Natural killer cell (primary cell): ENCODE measurements at regions of chr5 and their contacts with region 1.

Region 1: DNA sequence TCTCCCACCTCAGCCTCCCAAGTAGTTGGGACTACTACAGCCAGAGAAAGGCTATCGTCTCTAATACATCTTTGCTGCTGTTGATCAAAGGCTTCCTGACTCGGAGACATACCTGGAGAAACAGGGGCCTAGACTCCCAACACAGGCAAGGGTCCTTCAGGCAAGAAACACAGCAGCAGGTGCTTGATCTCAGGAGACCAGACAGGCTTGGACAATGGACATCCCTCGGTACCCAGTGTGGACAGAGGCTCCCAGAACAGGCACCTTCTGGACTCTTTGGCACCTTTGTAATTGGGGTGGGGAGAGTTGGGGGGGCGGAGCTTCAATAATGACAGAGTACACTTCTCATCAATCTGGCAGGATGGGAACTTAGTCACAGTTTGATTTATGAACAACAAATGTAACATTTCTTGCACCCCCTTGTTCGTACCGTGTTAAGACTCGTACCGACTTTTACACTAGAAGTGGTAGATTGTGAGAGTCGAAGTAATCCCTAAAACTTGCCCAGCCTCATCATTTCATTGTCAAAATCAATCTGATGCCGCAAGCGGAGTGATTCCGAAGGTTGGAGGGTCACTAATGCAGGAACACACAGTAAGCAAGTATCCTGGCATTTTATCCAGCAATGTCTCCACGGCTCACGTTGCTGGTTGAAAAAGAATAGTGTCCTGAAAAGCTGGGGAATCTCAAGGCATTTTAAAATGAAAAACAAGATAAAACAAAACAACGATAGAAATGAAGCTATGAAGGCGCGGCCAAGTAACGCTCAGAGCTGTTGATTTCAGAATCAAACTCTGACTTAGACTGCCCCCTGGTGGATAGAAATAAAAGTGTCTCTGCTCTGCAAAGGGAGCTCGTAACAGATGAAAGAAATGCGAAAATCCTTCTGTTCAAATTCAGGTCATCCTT is 46.4 kb upstream of the STK32A start:
- DNase-seq: peak in 1 of 2 donors; percentile 79
- ATAC-seq: peak; percentile 69 to 87 (median 80)
- H3K4me3 ChIP-seq: no peak overlapping the region
- H3K4me3 Mint-ChIP-seq: no peak overlapping the region
- H3K27ac ChIP-seq: no peak overlapping the region
- H3K27ac Mint-ChIP-seq: no peak overlapping the region
- H3K4me1 ChIP-seq: peaks cover 3% of the 10 kb centered on the region
- H3K4me1 Mint-ChIP-seq: peaks cover 6 to 8% of the 10 kb centered on the region in 2 donors
- H3K27me3 ChIP-seq: no peaks in the 10 kb centered on the region
- H3K27me3 Mint-ChIP-seq: peaks cover 6 to 33% of the 10 kb centered on the region in 2 donors
- CTCF ChIP-seq: peak; percentile 88

Region 2: GRCh38 chr5:146426853-146427618 is 761.4 kb before region 1 on chr5:
- intact Hi-C with region 1: loop called (anchors 5 kb)
- DNase-seq: peak in 1 of 2 donors; percentile 57
- ATAC-seq: peak; percentile 46 to 76 (median 61)
- H3K4me3 ChIP-seq: no peak overlapping the region
- H3K4me3 Mint-ChIP-seq: no peak overlapping the region
- H3K27ac ChIP-seq: no peak overlapping the region
- H3K27ac Mint-ChIP-seq: no peak overlapping the region
- H3K4me1 ChIP-seq: no peaks in the 10 kb centered on the region
- H3K4me1 Mint-ChIP-seq: peaks cover 5 to 7% of the 10 kb centered on the region in 2 donors
- H3K27me3 ChIP-seq: no peaks in the 10 kb centered on the region
- H3K27me3 Mint-ChIP-seq: peaks cover 10 to 14% of the 10 kb centered on the region in 2 donors
- CTCF ChIP-seq: peak; percentile 77

Region 3: GRCh38 chr5:146533260-146533857 is 655.1 kb before region 1 on chr5:
- intact Hi-C with region 1: loop called (anchors 1 kb)
- DNase-seq: peak; percentile 62 to 85
- ATAC-seq: peak; percentile 90 to 99 (median 98)
- H3K4me3 ChIP-seq: no peak overlapping the region
- H3K4me3 Mint-ChIP-seq: no peak overlapping the region
- H3K27ac ChIP-seq: no peak overlapping the region
- H3K27ac Mint-ChIP-seq: no peak overlapping the region
- H3K4me1 ChIP-seq: no peaks in the 10 kb centered on the region
- H3K4me1 Mint-ChIP-seq: peaks cover 6% of the 10 kb centered on the region in 2 donors
- H3K27me3 ChIP-seq: no peaks in the 10 kb centered on the region
- H3K27me3 Mint-ChIP-seq: peaks cover 0 to under 1% of the 10 kb centered on the region in 2 donors
- CTCF ChIP-seq: peak; percentile 78

Region 4: GRCh38 chr5:146541958-146542849 is 646.2 kb before region 1 on chr5:
- intact Hi-C with region 1: loop called (anchors 1 kb)
- DNase-seq: peak; percentile 64 to 78
- ATAC-seq: peak; percentile 80 to 99 (median 89)
- H3K4me3 ChIP-seq: no peak overlapping the region
- H3K4me3 Mint-ChIP-seq: no peak overlapping the region
- H3K27ac ChIP-seq: no peak overlapping the region
- H3K27ac Mint-ChIP-seq: no peak overlapping the region
- H3K4me1 ChIP-seq: no peaks in the 10 kb centered on the region
- H3K4me1 Mint-ChIP-seq: no peaks in the 10 kb centered on the region
- H3K27me3 ChIP-seq: peaks cover 4% of the 10 kb centered on the region
- H3K27me3 Mint-ChIP-seq: peaks cover 0 to 7% of the 10 kb centered on the region in 2 donors
- CTCF ChIP-seq: peak; percentile 92

Region 5: GRCh38 chr5:146965761-146966659 is 222.4 kb before region 1 on chr5:
- intact Hi-C with region 1: loop called (anchors 5 kb)
- DNase-seq: peak; percentile 38 to 83
- ATAC-seq: peak; percentile 90 to 99 (median 97)
- H3K4me3 ChIP-seq: no peak overlapping the region
- H3K4me3 Mint-ChIP-seq: no peak overlapping the region
- H3K27ac ChIP-seq: no peak overlapping the region
- H3K27ac Mint-ChIP-seq: no peak overlapping the region
- H3K4me1 ChIP-seq: no peaks in the 10 kb centered on the region
- H3K4me1 Mint-ChIP-seq: no peaks in the 10 kb centered on the region
- H3K27me3 ChIP-seq: no peaks in the 10 kb centered on the region
- H3K27me3 Mint-ChIP-seq: peaks cover 6 to 19% of the 10 kb centered on the region in 2 donors
- CTCF ChIP-seq: peak; percentile 83